GM12878 (cell line): ENCODE measurements at regions of chr14 and their contacts with region 1.

Region 1: DNA sequence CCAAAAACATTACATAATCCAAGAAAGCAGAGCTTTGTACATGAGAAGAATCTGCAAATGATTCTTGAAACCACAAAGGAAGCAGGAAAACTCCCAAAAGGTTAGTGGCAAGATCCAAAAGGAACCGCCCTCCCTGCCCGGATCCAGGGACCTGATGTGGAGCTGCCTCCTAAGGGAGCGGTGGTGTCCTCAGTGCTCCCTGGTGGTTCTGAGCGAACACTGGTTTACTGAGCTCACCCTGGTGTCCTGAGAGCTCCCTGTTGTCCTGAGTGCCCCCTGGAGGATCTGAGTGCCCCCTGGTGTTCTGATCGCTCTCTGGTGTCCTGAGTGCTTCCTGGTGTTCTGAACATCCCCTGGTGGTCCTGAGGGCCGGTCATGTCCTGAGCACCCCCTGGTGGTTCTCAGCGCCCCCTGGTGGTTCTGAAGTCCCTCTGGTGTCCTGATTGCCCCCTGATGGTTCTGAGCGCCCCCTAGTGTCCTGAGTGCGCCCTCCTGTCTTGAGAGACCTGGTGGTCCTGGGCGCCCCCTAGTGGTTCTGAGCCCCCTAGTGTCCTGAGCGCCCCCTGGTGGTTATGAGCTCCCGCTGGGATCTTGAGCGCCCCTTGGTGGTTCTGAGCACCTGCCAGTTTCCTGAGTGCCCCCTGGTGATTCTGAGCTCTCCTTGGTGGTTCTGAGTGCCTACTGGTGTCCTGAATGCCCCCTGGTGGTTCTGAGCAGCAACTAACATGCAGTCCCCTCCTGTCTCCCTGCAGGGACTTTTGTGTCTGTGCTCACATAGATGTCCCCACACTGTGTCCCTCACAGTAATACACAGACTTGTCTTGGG is 891.1 kb downstream of the TMEM121 start:
- DNase-seq: peak; percentile 72
- ATAC-seq: peak; percentile 99
- H3K4me3 ChIP-seq: no peak overlapping the region
- H3K27ac ChIP-seq: no peak overlapping the region
- H3K4me1 ChIP-seq: no peaks in the 10 kb centered on the region
- H3K27me3 ChIP-seq: no peaks in the 10 kb centered on the region; a peak in 1 of 4 replicates
- CTCF ChIP-seq: peak; percentile 99 to 100 (median 100)
- EP300 ChIP-seq: no peak
- POLR2A ChIP-seq: no peak
- RAD21 ChIP-seq: peak; percentile 49; the same call in 1 of the 2 replicates

Region 2: DNA sequence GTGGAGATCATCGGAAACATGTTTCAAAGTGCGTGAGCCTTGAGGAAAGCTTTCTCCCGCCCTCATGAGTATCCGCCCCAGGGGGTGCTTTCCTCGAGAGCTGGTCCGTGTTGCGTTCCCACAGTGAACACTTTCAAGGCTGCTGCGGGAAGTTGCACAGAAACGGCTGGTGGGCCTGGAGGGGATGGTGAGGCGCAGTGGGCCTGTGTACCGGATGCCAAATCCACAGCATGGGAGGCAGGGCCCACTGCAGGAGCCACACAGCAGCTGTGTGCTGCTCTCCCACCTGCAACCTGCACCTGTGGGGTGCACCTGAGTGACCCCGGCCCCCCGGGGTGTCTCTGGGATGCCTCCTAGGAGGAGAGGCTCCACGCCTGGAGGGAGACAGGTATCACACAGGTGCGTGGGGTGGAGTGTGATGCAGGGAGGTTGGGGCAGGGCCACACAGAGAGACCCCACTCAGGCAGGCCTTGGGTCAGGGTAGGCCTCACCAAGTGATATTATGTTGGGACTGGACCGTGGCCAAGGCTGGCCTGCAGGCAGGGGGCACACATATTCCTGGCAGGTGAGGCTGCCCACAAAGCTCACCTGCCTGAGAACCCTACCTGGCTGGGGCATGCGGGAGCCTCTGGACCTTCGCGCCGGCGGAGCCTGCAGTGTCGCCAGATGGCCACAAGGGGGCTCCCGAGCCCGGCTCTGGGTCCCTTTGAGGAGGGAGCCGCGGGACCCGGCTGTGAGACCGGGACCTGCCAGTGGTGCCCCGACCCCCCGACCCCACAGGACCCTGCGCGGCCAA is 879.9 kb before region 1 on chr14:
- CTCF ChIA-PET with region 1: interaction called, 6 read pairs
- POLR2A ChIA-PET with region 1: no interaction called
- RAD21 ChIA-PET with region 1: interaction called, 4 read pairs
- SMC1A ChIA-PET with region 1: no interaction called
- in situ Hi-C with region 1: no loop called
- intact Hi-C with region 1: loop called (anchors 10 kb)
- DNase-seq: no peak
- ATAC-seq: peak; percentile 98
- H3K4me3 ChIP-seq: no peak overlapping the region
- H3K27ac ChIP-seq: no peak overlapping the region
- H3K4me1 ChIP-seq: no peaks in the 10 kb centered on the region
- H3K27me3 ChIP-seq: no peaks in the 10 kb centered on the region; a peak in 2 of 4 replicates
- CTCF ChIP-seq: peak; percentile 89 to 100 (median 90)
- EP300 ChIP-seq: no peak
- POLR2A ChIP-seq: no peak
- RAD21 ChIP-seq: peak; percentile 71

Region 3: DNA sequence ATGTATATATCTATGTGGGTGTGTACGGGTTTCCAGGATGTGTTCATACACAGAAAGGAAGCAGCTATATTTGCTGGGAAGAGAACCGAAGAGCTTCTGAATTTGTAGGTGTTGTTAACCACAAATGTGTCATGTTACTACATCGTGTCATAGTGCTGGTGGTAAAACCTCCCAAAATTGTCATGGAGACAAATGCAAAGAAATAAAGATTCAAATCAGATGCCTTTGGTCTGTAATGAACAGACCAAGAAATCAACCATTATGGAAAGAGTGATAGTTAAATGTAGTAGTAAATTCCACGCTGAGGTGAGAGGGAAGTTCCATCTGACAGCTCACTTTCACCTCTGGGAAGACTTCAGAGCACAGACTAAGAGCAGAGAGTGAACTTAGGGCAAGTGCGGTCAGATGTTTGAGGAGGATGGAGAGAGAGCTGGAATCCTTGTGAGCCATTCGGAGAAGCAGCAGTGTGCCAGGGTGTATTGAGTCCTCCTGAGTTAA is 403.5 kb before region 1 on chr14:
- CTCF ChIA-PET with region 1: no interaction called
- POLR2A ChIA-PET with region 1: no interaction called
- RAD21 ChIA-PET with region 1: no interaction called
- SMC1A ChIA-PET with region 1: no interaction called
- in situ Hi-C with region 1: no loop called
- intact Hi-C with region 1: no loop called
- DNase-seq: no peak
- ATAC-seq: no peak
- H3K4me3 ChIP-seq: no peak overlapping the region
- H3K27ac ChIP-seq: no peak overlapping the region
- H3K4me1 ChIP-seq: no peaks in the 10 kb centered on the region
- H3K27me3 ChIP-seq: no peaks in the 10 kb centered on the region
- CTCF ChIP-seq: no peak
- EP300 ChIP-seq: no peak
- POLR2A ChIP-seq: no peak
- RAD21 ChIP-seq: no peak

Region 4: GRCh38 chr14:106294324-106294723 is 123.1 kb before region 1 on chr14:
- CTCF ChIA-PET with region 1: interaction called, 17 read pairs
- POLR2A ChIA-PET with region 1: no interaction called
- RAD21 ChIA-PET with region 1: no interaction called
- SMC1A ChIA-PET with region 1: no interaction called
- in situ Hi-C with region 1: no loop called
- intact Hi-C with region 1: no loop called
- DNase-seq: no peak
- ATAC-seq: no peak; the same call in 2 of the 3 replicates
- H3K4me3 ChIP-seq: no peak overlapping the region
- H3K27ac ChIP-seq: no peak overlapping the region
- H3K4me1 ChIP-seq: no peaks in the 10 kb centered on the region; the same call in 1 of the 2 replicates
- H3K27me3 ChIP-seq: no peaks in the 10 kb centered on the region; a peak in 1 of 4 replicates
- CTCF ChIP-seq: no peak
- EP300 ChIP-seq: no peak
- POLR2A ChIP-seq: no peak
- RAD21 ChIP-seq: no peak

Region 5: GRCh38 chr14:106378191-106378590 is 39.2 kb before region 1 on chr14:
- CTCF ChIA-PET with region 1: interaction called, 78 read pairs
- POLR2A ChIA-PET with region 1: no interaction called
- RAD21 ChIA-PET with region 1: interaction called, 13 read pairs
- SMC1A ChIA-PET with region 1: interaction called, 15 read pairs
- in situ Hi-C with region 1: no loop called
- intact Hi-C with region 1: no loop called
- DNase-seq: no peak
- ATAC-seq: peak; percentile 82
- H3K4me3 ChIP-seq: no peak overlapping the region
- H3K27ac ChIP-seq: no peak overlapping the region
- H3K4me1 ChIP-seq: peaks cover 6% of the 10 kb centered on the region; the same call in 1 of the 2 replicates
- H3K27me3 ChIP-seq: peaks cover 0 to 2% of the 10 kb centered on the region in 2 experiments; a peak in 2 of 4 replicates
- CTCF ChIP-seq: peak; percentile 48 to 75 (median 66)
- EP300 ChIP-seq: no peak
- POLR2A ChIP-seq: no peak
- RAD21 ChIP-seq: 0 out of 2 replicates have a peak, but pooled peaks have one; percentile 13

Region 6: DNA sequence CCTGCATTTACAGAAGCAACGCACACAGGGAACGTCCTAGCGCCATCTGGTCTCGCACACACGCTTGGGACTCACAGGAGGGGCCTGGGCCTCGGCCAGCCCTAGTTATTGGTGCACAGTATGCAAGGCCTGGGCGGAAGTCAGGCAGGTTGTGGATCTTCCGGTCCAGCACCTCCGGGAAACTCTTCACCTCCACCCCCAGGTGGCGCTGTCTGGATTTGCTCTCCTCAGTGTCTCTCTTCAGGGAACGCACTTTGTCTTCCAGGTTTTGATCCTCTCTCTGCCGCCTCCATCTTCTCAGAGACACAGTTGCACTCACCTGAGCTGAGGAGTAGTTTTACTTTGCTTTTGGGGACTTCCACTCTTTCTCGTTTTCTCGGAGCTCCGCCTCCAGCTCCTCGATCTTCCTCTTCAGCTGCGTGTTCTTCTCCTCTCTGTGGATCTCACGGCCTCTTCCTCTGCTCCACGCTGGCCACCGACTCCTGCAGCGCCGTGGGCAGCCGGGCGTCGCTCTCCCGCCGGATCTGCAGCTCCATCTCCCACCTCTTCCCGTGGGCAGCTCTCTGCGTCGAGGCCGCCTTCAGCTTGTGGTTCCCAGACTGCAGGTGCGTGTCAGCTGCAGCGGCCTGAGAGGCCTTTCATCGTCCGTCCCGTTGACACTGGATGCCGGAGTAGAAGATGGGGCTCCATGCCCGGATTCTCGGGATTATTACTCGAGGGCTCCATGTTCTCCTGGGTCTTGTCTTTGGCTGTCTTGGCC is 42.7 kb after region 1 on chr14:
- CTCF ChIA-PET with region 1: interaction called, 152 read pairs
- POLR2A ChIA-PET with region 1: no interaction called
- RAD21 ChIA-PET with region 1: no interaction called
- SMC1A ChIA-PET with region 1: interaction called, 3 read pairs
- in situ Hi-C with region 1: no loop called
- intact Hi-C with region 1: no loop called
- DNase-seq: no peak
- ATAC-seq: peak; percentile 91
- H3K4me3 ChIP-seq: no peak overlapping the region
- H3K27ac ChIP-seq: no peak overlapping the region
- H3K4me1 ChIP-seq: no peaks in the 10 kb centered on the region
- H3K27me3 ChIP-seq: no peaks in the 10 kb centered on the region
- CTCF ChIP-seq: peak; percentile 41 to 56 (median 56)
- EP300 ChIP-seq: no peak
- POLR2A ChIP-seq: no peak
- RAD21 ChIP-seq: peak; percentile 45

Region 7: DNA sequence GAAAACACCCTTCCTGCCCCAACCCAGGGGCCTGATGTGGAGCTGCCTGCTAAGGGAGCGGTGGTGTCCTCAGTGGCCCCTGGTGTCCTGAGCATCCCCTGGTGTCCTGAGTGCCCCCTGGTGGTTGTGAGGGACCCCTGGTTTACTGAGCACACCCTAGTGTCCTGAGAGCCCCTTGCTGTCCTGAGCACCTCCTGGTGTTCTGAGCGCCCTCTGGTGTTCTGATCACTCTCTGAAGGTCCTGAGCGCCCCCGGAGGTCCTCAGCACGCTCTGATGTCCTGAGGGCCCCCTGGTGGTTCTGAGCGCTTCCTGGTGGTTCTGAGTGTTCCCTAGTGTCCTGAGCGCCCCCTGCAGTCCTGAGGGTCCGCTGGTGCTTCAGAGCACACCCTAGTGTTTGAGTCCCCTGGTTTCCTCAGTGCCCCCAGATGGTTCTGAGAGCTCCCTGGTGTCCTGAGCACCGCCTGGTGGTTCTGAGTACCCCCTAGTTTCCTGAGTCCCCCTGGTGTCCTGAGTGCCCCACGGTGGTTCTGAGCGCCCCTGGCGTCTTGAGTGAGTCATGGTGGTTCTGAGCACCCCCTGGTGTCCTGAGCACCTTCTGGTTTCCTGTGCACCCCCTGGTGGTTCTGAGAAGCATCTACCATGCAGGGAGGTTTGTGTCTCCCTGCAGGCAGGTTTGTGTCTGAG is 113.1 kb after region 1 on chr14:
- CTCF ChIA-PET with region 1: interaction called, 205 read pairs
- POLR2A ChIA-PET with region 1: no interaction called
- RAD21 ChIA-PET with region 1: interaction called, 10 read pairs
- SMC1A ChIA-PET with region 1: interaction called, 11 read pairs
- in situ Hi-C with region 1: no loop called
- intact Hi-C with region 1: loop called (anchors 1 kb)
- DNase-seq: peak; percentile 51
- ATAC-seq: peak; percentile 97
- H3K4me3 ChIP-seq: no peak overlapping the region
- H3K27ac ChIP-seq: no peak overlapping the region
- H3K4me1 ChIP-seq: peaks cover 8% of the 10 kb centered on the region
- H3K27me3 ChIP-seq: no peaks in the 10 kb centered on the region
- CTCF ChIP-seq: peak; percentile 79 to 91 (median 88)
- EP300 ChIP-seq: no peak
- POLR2A ChIP-seq: no peak
- RAD21 ChIP-seq: peak; percentile 51; the same call in 1 of the 2 replicates